A673 (cell line): ENCODE measurements at regions of chr5 and their contacts with region 1.

Region 1: GRCh38 chr5:32232441-32233219 is 58.5 kb upstream of the GOLPH3 start:
- DNase-seq: peak; percentile 76
- H3K4me3 ChIP-seq: no peak overlapping the region
- H3K27ac ChIP-seq: no peak overlapping the region
- H3K4me1 ChIP-seq: no peaks in the 10 kb centered on the region
- H3K27me3 ChIP-seq: no peaks in the 10 kb centered on the region
- CTCF ChIP-seq: peak; percentile 89

Region 2: DNA sequence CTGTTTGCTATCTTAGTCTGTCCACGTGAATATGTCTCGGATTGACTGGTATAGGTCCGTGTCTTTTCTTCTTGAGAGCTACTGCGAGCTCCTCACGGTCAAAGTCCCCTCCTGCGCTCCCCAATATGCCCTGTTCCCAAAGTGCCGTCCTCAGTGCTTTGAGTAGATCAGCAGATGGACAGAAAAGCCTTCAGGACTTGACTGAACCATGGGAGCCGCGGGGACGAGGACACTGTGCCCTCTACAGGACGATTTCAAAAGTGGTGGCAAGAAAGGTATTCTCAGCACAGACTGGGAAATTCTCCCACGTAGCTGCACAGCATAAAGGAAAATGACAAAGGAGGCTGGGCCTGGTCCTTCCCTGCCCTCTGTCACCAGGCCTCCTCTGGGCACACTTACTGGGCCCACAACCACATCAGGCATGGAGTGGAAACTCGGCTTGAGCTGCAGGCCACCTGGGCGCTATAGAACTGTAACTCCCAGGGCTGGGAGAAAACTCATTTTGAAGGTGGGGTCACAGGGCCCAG is 96.7 kb after region 1 on chr5:
- CTCF ChIA-PET with region 1: interaction called, 10 read pairs
- POLR2A ChIA-PET with region 1: no interaction called
- intact Hi-C with region 1: loop called (anchors 1 kb)
- DNase-seq: peak; percentile 72
- H3K4me3 ChIP-seq: no peak overlapping the region
- H3K27ac ChIP-seq: no peak overlapping the region
- H3K4me1 ChIP-seq: no peaks in the 10 kb centered on the region
- H3K27me3 ChIP-seq: no peaks in the 10 kb centered on the region
- CTCF ChIP-seq: peak; percentile 76

Region 3: DNA sequence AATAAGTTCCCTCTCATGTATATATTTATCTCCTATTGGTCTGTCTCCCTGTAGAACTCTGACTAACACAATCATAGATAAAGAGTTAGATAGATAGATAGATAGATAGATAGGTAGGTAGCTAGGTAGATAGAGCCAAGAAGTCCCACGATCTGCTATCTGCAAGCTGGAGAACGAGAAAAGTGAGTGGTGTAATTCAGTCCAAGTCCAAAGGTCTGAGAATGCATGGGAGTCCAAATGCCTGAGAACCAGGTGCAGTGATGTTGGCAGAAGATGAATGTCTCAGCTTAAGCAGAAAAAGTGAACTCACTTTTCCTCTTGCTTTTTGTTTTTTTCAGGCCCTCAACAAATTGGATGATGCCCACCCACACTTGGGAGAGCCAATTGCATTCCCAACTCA is 249.6 kb after region 1 on chr5:
- CTCF ChIA-PET with region 1: no interaction called
- POLR2A ChIA-PET with region 1: no interaction called
- intact Hi-C with region 1: loop called (anchors 5 kb)
- DNase-seq: no peak
- H3K4me3 ChIP-seq: no peak overlapping the region
- H3K27ac ChIP-seq: no peak overlapping the region
- H3K4me1 ChIP-seq: no peaks in the 10 kb centered on the region
- H3K27me3 ChIP-seq: no peaks in the 10 kb centered on the region
- CTCF ChIP-seq: no peak

Region 4: DNA sequence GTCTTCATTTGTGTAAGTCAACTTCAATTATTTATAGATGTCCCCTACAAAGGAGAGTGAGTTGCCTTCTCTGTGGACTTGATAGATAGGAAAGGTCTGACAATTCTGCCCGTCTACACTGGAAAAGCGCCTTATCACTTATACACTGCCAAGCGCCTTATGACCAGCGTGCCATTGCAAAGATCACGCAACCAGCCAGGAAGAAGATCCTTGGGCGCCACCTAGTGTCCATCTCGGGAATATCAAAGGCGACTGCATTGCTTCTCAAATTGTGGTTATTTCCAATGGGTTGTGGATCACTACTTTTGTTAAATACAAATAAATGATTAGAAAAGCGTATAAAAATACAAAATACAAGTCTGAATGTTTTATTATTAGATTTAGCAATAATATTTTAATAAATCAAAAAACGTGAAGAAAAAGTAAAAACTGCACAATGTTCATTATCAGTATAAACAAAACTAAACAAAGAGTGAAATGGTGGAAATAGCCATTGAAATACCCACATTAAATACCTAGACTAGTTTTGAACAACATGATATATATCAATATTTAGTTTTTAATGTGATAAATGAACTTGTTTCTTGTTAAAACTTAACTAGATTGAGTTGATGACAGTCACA is 380.5 kb after region 1 on chr5:
- CTCF ChIA-PET with region 1: interaction called, 5 read pairs
- POLR2A ChIA-PET with region 1: no interaction called
- intact Hi-C with region 1: loop called (anchors 2 kb)
- DNase-seq: peak; percentile 87
- H3K4me3 ChIP-seq: peak overlapping the region; percentile 2
- H3K27ac ChIP-seq: peak overlapping the region; percentile 9
- H3K4me1 ChIP-seq: peaks cover 9% of the 10 kb centered on the region
- H3K27me3 ChIP-seq: no peaks in the 10 kb centered on the region
- CTCF ChIP-seq: peak; percentile 92

Region 5: GRCh38 chr5:32767948-32768427 is 535.4 kb after region 1 on chr5:
- CTCF ChIA-PET with region 1: no interaction called
- POLR2A ChIA-PET with region 1: no interaction called
- intact Hi-C with region 1: no loop called
- DNase-seq: no peak
- H3K4me3 ChIP-seq: no peak overlapping the region
- H3K27ac ChIP-seq: no peak overlapping the region
- H3K4me1 ChIP-seq: no peaks in the 10 kb centered on the region
- H3K27me3 ChIP-seq: no peaks in the 10 kb centered on the region
- CTCF ChIP-seq: no peak